BJ (cell line): ENCODE measurements at regions of chr7 and their contacts with region 1.

Region 1: GRCh38 chr7:130069978-130070860 is at the start of gene KLHDC10:
- DNase-seq: peak; percentile 93
- H3K4me3 ChIP-seq: peak within 1 kb of the TSS; percentile 84
- H3K27me3 ChIP-seq: no peaks in the 10 kb centered on the region
- CTCF ChIP-seq: no peak
- polyA plus RNA-seq, gene KLHDC10: 15.9 and 23.4 TPM in 2 replicates

Region 2: DNA sequence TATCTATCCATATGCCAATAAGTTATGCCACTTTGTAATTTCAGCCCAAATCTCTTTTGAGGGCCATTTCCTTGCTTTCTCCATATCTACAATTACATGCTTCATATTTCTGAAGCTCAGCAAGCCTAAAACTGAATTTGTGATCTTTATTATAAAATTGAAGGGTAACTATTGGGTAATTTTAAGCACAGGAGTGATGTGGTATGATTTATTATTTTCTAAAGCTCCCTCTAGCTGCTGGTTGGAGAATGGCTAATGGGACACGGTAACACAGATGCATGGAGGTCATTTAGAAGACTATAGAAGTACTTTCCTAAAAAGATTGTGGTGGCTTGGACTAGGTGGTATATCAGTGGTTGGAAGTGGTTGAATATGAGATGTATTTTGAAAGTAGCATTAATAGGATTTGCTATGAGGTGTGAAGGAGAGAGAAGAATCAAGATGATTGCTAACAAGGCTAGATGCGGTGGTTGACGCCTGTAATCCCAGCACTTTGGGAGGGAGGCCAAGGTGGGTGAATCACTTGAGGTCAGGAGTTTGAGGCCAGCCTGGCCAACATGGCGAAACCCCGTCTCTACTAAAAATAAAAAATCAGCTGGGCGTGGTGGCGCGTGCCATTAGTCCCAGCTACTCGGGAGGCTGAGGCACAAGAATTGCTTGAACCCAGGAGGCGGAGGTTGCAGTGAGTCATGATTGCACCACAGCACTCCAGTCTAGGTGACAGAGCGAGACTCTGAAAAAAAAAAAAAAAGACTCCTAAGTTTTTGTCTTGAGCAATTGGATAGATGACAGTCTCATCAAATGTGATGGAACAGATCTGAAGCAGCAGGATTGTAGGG is 14.0 kb after region 1 on chr7:
- CTCF ChIA-PET with region 1: interaction called, 15 read pairs
- POLR2A ChIA-PET with region 1: no interaction called
- DNase-seq: no peak
- H3K4me3 ChIP-seq: no peak overlapping the region
- H3K27me3 ChIP-seq: no peaks in the 10 kb centered on the region
- CTCF ChIP-seq: peak; percentile 30

Region 3: GRCh38 chr7:130277763-130278643 is 207.8 kb after region 1 on chr7:
- CTCF ChIA-PET with region 1: no interaction called
- POLR2A ChIA-PET with region 1: no interaction called
- DNase-seq: no peak
- H3K4me3 ChIP-seq: no peak overlapping the region
- H3K27me3 ChIP-seq: no peaks in the 10 kb centered on the region
- CTCF ChIP-seq: peak; percentile 62

Region 4: DNA sequence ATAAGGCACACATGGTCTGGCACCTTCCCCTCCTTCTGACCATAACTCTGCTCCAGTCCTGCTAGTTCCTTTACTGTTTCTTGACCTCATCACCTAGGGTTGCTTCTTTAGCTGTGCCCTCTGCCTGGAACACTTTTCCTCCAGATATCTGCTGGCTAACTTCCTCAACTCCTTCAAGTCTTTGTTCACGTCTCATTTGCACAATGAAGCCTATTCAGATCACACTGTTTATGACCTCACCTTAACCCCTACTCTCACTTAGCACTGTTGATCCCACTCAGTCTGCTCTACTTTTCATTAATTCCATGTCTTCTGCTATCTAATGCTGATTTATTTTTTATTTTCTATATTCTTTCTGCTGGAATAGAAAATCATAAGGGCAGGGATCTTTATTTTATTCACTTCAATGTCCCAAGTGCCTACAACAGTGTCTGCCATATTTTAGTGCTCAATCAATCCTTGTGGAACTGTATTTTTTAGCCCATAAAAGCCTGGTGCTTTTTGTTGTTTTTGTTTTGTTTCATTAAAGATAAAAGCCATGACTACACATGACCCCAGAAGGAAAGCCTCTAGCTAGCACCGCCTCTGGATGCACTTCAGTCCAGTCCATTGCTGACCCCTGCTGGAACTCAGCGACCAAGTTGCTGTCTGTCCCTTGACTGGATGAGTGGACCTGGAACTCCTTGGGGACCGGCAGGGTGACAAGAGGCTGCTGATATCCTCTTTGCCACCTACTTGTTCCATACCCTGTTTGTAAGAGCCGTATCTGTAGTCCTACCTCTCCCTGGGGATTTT is 651.5 kb after region 1 on chr7:
- CTCF ChIA-PET with region 1: interaction called, 35 read pairs
- POLR2A ChIA-PET with region 1: no interaction called
- DNase-seq: no peak
- H3K4me3 ChIP-seq: no peak overlapping the region
- H3K27me3 ChIP-seq: peaks cover 3% of the 10 kb centered on the region
- CTCF ChIP-seq: peak; percentile 72